ENCODE measurements at regions of chr19 and their contacts with region 1.

Region 1: GRCh38 chr19:47428177-47428894 is 9.0 kb upstream of the MEIS3 start:
- DNase-seq: peak; percentile 94
- H3K4me3 Mint-ChIP-seq: no peak overlapping the region
- H3K27ac Mint-ChIP-seq: no peak overlapping the region
- H3K4me1 Mint-ChIP-seq: peaks cover 15% of the 10 kb centered on the region
- H3K27me3 Mint-ChIP-seq: peaks cover 49% of the 10 kb centered on the region

Region 2: GRCh38 chr19:47391510-47392223 is 36.7 kb before region 1 on chr19:
- CTCF ChIA-PET with region 1: interaction called, 6 read pairs
- intact Hi-C with region 1: loop called (anchors 1 kb)
- DNase-seq: peak; percentile 91
- H3K4me3 Mint-ChIP-seq: no peak overlapping the region
- H3K27ac Mint-ChIP-seq: no peak overlapping the region
- H3K4me1 Mint-ChIP-seq: peaks cover 2% of the 10 kb centered on the region
- H3K27me3 Mint-ChIP-seq: peaks cover 2% of the 10 kb centered on the region

Measured in activated naive CD4-positive, alpha-beta T cell treated with anti-CD3 and anti-CD28 coated beads for 36 hours (primary cell).